ENCODE measurements at regions of chr10 and their contacts with region 1.

Region 1: GRCh38 chr10:28250782-28251181 is 52.1 kb downstream of the MPP7 start:
- DNase-seq: no peak
- ATAC-seq: peak; percentile 47
- H3K4me3 Mint-ChIP-seq: no peak overlapping the region
- H3K27ac Mint-ChIP-seq: no peak overlapping the region
- H3K4me1 Mint-ChIP-seq: peaks cover 42% of the 10 kb centered on the region
- H3K27me3 Mint-ChIP-seq: no peaks in the 10 kb centered on the region

Region 2: GRCh38 chr10:28291881-28292297 is 41.1 kb after region 1 on chr10:
- CTCF ChIA-PET with region 1: interaction called, 13 read pairs
- POLR2A ChIA-PET with region 1: interaction called, 3 read pairs
- intact Hi-C with region 1: no loop called
- DNase-seq: peak; percentile 80
- ATAC-seq: peak; percentile 97
- H3K4me3 Mint-ChIP-seq: no peak overlapping the region
- H3K27ac Mint-ChIP-seq: peak overlapping the region; percentile 72
- H3K4me1 Mint-ChIP-seq: peaks cover 56% of the 10 kb centered on the region
- H3K27me3 Mint-ChIP-seq: no peaks in the 10 kb centered on the region

Region 3: DNA sequence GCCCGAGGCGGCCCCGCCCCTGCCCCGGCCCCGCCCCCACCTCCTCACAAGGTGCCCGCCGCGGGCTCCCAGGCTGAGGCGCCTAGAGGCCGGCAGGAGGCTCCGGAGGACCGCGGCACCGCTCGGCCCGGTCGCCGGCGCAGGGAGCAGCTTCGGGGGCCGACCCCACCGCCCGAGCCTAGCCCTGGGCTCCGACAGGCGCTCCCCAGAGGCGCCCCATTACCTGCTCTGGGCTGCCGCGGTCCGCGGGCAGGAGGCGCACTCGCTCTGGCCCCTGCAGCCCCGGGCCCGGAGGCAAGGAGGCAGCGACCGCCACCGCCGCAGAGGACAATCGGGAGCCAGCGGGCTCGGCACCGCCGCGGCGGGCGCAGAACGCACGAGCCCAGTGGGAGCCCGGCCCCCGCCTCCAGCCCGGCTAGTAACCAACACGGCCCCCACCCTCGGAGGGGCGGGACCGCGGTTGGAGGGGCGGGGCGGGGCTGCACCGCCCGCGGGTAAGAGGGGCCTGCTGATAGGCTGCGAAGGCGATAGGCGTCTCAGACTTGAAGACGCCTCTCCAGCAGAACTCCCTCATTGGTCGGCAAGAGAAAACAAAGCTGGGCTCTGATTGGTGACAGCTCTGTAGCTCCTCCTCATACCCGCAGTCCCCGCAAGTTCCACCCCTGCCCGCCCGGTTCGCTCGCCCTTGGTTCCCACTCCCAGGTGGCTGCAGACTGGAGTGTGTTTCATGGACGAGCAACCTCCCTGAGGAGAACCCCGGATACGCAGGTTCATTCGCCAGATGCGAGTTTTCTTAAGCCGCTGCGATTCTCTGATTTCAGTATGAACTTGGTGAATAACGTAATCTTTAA is 52.1 kb after region 1 on chr10 and contains the start of gene MPP7:
- CTCF ChIA-PET with region 1: interaction called, 46 read pairs
- POLR2A ChIA-PET with region 1: interaction called, 7 read pairs
- intact Hi-C with region 1: loop called (anchors 2 kb)
- DNase-seq: peak; percentile 97
- ATAC-seq: peak; percentile 97
- H3K4me3 Mint-ChIP-seq: peak within 1 kb of the TSS; percentile 90
- H3K27ac Mint-ChIP-seq: peak within 1 kb of the TSS; percentile 80
- H3K4me1 Mint-ChIP-seq: peaks cover 49% of the 10 kb centered on the region
- H3K27me3 Mint-ChIP-seq: no peaks in the 10 kb centered on the region
- total RNA-seq, gene MPP7: 10.9 to 11.0 TPM

Region 4: GRCh38 chr10:28387141-28387540 is 136.4 kb after region 1 on chr10:
- CTCF ChIA-PET with region 1: interaction called, 160 read pairs
- POLR2A ChIA-PET with region 1: no interaction called
- intact Hi-C with region 1: loop called (anchors 1 kb)
- DNase-seq: no peak
- ATAC-seq: no peak
- H3K4me3 Mint-ChIP-seq: no peak overlapping the region
- H3K27ac Mint-ChIP-seq: no peak overlapping the region
- H3K4me1 Mint-ChIP-seq: peaks cover 11% of the 10 kb centered on the region
- H3K27me3 Mint-ChIP-seq: peaks cover 2% of the 10 kb centered on the region

Region 5: GRCh38 chr10:28393966-28394568 is 143.3 kb after region 1 on chr10:
- CTCF ChIA-PET with region 1: interaction called, 53 read pairs
- POLR2A ChIA-PET with region 1: no interaction called
- intact Hi-C with region 1: no loop called
- DNase-seq: peak; percentile 82
- ATAC-seq: peak; percentile 87
- H3K4me3 Mint-ChIP-seq: no peak overlapping the region
- H3K27ac Mint-ChIP-seq: no peak overlapping the region
- H3K4me1 Mint-ChIP-seq: peaks cover 4% of the 10 kb centered on the region
- H3K27me3 Mint-ChIP-seq: peaks cover 4% of the 10 kb centered on the region